Activated naive CD4-positive, alpha-beta T cell treated with anti-CD3 and anti-CD28 coated beads for 36 hours (primary cell): ENCODE measurements at regions of chr5 and their contacts with region 1.

Region 1: GRCh38 chr5:171984748-171985419 is 21.6 kb downstream of the FBXW11 start:
- DNase-seq: peak; percentile 63
- H3K4me3 Mint-ChIP-seq: no peak overlapping the region
- H3K27ac Mint-ChIP-seq: peak overlapping the region; percentile 50
- H3K4me1 Mint-ChIP-seq: peaks cover 55% of the 10 kb centered on the region
- H3K27me3 Mint-ChIP-seq: no peaks in the 10 kb centered on the region

Region 2: GRCh38 chr5:171850324-171851285 is 134.3 kb before region 1 on chr5:
- CTCF ChIA-PET with region 1: no interaction called
- intact Hi-C with region 1: no loop called
- DNase-seq: peak; percentile 15
- H3K4me3 Mint-ChIP-seq: no peak overlapping the region
- H3K27ac Mint-ChIP-seq: no peak overlapping the region
- H3K4me1 Mint-ChIP-seq: peaks cover under 1% of the 10 kb centered on the region
- H3K27me3 Mint-ChIP-seq: no peaks in the 10 kb centered on the region

Region 3: DNA sequence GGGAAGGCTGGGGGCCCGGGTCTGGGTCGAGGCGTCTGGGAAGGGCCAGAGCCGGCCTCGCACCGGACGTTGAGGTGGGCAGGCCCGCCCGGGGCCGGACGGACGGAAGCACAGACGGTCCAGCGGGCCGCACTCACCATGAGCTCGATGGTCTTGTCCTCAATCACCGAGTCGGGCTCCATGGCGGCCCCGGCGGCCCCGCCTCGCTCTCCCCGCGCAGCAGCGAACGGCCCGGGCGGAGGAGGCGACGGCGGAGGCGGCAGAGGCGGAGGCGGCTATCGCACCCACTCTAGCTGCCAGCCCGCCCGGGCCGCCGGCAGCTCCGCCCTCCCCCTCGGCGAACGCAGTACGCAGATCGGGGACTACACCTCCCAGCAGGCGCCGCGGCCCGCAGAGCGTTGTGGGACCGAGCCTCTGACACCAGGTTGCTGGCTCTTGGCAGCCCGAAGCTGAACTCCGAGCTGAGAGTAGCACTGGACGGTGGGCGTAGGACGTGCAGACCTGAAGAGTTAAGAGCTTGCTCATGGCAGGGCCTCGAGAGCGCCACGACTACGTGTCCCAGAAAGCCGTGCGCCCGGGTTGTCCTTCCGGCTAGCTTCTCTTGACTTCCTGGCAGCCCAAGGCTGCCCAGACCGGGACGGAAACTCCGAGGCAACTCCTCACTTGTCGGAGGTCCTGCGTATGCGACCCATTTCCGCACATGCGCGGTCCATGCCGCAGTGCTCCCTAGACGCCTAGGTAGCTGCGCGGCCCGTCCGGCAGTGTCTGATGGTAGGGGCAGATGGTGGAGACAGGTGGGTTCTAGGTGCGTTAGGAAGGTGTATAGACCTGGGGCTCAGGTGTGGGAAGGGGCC is 21.7 kb after region 1 on chr5 and contains the start of gene FBXW11:
- CTCF ChIA-PET with region 1: no interaction called
- intact Hi-C with region 1: loop called (anchors 1 kb)
- DNase-seq: peak; percentile 96
- H3K4me3 Mint-ChIP-seq: peak within 1 kb of the TSS; percentile 96
- H3K27ac Mint-ChIP-seq: peak within 1 kb of the TSS; percentile 99
- H3K4me1 Mint-ChIP-seq: peaks cover 46% of the 10 kb centered on the region
- H3K27me3 Mint-ChIP-seq: no peaks in the 10 kb centered on the region
- total RNA-seq, gene FBXW11: 32.8 to 35.5 TPM

Region 4: DNA sequence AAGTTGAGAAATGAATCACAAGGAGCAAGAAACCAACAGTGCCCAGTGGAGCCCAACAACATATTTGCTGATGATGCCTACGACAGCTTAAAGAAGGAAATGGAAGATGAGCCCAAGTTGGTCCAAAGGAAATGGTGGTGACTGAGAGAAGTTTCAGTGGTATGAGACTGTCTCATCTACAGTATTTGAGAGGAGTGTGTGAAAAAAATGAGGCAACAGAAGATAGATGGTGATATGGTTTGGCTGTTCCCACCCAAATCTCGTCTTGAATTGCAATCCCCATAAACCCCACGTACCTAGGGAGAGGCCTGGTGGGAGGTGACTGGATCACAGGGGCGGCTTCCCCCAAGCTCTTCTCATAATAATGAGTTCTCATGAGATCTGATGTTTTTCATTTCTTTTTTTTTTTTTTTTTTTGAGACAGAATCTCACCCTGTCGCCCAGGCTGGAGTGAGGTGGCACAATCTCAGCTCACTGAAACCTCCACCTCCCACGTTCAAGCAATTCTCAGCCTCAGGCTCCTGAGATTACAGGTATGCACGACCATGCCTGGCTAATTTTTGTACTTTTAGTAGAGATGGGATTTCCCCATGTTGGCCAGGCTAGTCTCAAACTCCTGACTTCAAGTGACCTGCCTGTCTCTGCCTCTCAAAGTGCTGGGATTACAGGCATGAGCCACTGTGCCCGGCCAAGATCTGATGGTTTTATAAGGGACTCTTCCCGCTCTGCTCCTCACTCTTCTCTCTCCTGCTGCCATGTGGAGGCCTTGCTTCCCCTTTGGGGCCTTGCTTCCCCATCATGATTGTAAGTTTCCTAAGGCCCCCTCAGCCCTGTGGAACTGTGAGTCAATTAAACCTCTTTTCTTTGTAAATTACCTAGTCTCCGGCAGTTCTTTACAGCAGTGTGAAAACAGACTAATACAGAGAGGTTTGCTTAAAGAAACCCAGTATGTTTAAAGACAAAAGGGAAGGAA is 239.3 kb after region 1 on chr5:
- CTCF ChIA-PET with region 1: no interaction called
- intact Hi-C with region 1: loop called (anchors 5 kb)
- DNase-seq: peak; percentile 70
- H3K4me3 Mint-ChIP-seq: peak overlapping the region; percentile 11
- H3K27ac Mint-ChIP-seq: peak overlapping the region; percentile 37
- H3K4me1 Mint-ChIP-seq: peaks cover 30% of the 10 kb centered on the region
- H3K27me3 Mint-ChIP-seq: no peaks in the 10 kb centered on the region

Region 5: GRCh38 chr5:173094012-173094661 is 1109.3 kb after region 1 on chr5:
- CTCF ChIA-PET with region 1: no interaction called
- intact Hi-C with region 1: no loop called
- DNase-seq: no peak
- H3K4me3 Mint-ChIP-seq: no peak overlapping the region
- H3K27ac Mint-ChIP-seq: no peak overlapping the region
- H3K4me1 Mint-ChIP-seq: peaks cover 54% of the 10 kb centered on the region
- H3K27me3 Mint-ChIP-seq: no peaks in the 10 kb centered on the region